Tibial artery (tissue), 4 donors: ENCODE measurements at regions of chr5 and their contacts with region 1.

Region 1: GRCh38 chr5:35308421-35308820 is 78.1 kb upstream of the PRLR start:
- DNase-seq: no peak
- H3K4me3 ChIP-seq: no peak overlapping the region
- H3K27ac ChIP-seq: no peak overlapping the region
- H3K4me1 ChIP-seq: peaks cover 0 to 3% (median 0%) of the 10 kb centered on the region in 4 donors
- H3K27me3 ChIP-seq: no peaks in the 10 kb centered on the region
- CTCF ChIP-seq: no peak

Region 2: GRCh38 chr5:35246411-35246810 is 62.0 kb before region 1 on chr5:
- intact Hi-C with region 1: no loop called
- DNase-seq: no peak
- H3K4me3 ChIP-seq: no peak overlapping the region
- H3K27ac ChIP-seq: peak overlapping the region; percentile 56 to 74
- H3K4me1 ChIP-seq: peaks cover 0 to 31% (median 22%) of the 10 kb centered on the region in 4 donors
- H3K27me3 ChIP-seq: no peaks in the 10 kb centered on the region
- CTCF ChIP-seq: no peak

Region 3: GRCh38 chr5:36422952-36423351 is 1114.5 kb after region 1 on chr5:
- intact Hi-C with region 1: loop called (anchors 10 kb)
- DNase-seq: no peak
- H3K4me3 ChIP-seq: no peak overlapping the region
- H3K27ac ChIP-seq: no peak overlapping the region
- H3K4me1 ChIP-seq: no peaks in the 10 kb centered on the region
- H3K27me3 ChIP-seq: no peaks in the 10 kb centered on the region
- CTCF ChIP-seq: no peak